Calu3 (cell line): ENCODE measurements at regions of chr17 and their contacts with region 1.

Region 1: DNA sequence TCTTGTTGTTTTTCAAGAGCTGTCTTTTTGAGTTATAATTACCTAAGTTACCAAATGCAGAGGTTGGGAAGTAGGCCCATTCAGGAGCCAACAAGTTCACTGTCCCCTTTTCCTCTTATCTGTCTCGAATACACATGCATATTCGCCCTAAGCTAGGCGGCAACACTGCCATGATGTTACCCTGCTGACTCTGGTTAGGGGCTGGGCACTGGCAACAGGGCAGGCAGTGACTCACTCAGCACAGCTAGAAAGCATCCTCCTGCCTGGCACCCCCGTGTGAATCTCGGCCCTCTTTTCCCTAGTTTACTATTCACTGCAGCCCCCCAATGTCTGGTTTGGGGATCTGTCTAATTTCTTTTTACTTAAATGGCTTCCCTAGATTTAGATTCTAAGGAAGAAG is 13.8 kb downstream of the DBF4B start:
- DNase-seq: no peak
- H3K4me3 Mint-ChIP-seq: no peak overlapping the region
- H3K27ac Mint-ChIP-seq: no peak overlapping the region
- H3K4me1 Mint-ChIP-seq: no peaks in the 10 kb centered on the region
- H3K27me3 Mint-ChIP-seq: no peaks in the 10 kb centered on the region
- CTCF ChIP-seq: no peak

Region 2: GRCh38 chr17:44733753-44734152 is 11.5 kb after region 1 on chr17:
- CTCF ChIA-PET with region 1: interaction called, 10 read pairs
- intact Hi-C with region 1: no loop called
- DNase-seq: peak; percentile 45
- H3K4me3 Mint-ChIP-seq: no peak overlapping the region
- H3K27ac Mint-ChIP-seq: no peak overlapping the region
- H3K4me1 Mint-ChIP-seq: no peaks in the 10 kb centered on the region
- H3K27me3 Mint-ChIP-seq: no peaks in the 10 kb centered on the region
- CTCF ChIP-seq: no peak